ENCODE measurements at regions of chr10 and their contacts with region 1.

Region 1: DNA sequence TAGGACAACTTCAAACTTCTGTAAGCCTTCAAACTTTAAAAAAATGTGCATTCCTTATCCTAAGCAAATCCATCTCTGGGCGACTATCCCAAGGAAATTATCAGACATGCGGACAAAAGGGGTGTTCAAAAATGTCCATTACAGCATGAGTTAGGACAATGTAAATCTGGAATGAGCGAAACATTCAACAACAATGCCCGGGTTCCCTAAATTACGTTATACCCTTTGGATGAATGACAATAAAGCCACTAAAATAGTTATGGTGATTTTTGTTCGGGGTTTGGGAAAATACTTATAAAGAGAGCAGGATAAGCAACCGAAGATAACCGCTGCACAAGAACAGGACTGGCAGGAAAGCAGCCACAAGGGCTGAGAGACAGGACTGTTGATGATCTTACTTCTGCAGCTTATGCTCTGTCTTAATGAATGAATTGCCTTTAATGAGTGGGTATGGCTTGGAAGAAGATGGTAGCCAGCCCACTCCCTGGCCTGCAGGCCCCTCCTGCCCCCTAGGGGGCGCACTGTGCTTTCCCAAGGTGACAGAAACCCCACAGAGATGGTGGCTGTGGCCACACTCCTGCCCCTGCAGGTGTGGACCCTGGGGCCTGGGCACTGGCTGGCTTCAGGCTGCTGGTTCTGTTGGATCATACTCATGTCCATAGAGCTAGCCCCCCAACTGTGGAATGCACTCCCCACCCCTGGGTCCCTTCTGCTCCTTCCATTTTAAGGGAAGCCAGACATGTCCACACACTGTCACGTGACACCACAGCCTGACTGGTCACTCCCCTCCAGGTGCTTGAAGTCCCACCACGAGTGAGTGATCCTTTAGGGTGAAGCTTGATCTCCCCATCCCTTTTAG is 45.0 kb downstream of the ZCCHC24 start:
- DNase-seq: peak; percentile 51
- H3K4me3 ChIP-seq: no peak overlapping the region
- H3K27ac ChIP-seq: no peak overlapping the region
- H3K4me1 ChIP-seq: no peaks in the 10 kb centered on the region
- CTCF ChIP-seq: peak; percentile 89

Region 2: GRCh38 chr10:79463578-79464496 is 63.5 kb after region 1 on chr10:
- CTCF ChIA-PET with region 1: no interaction called
- POLR2A ChIA-PET with region 1: no interaction called
- intact Hi-C with region 1: loop called (anchors 2 kb)
- DNase-seq: no peak
- H3K4me3 ChIP-seq: no peak overlapping the region
- H3K27ac ChIP-seq: no peak overlapping the region
- H3K4me1 ChIP-seq: no peaks in the 10 kb centered on the region
- CTCF ChIP-seq: no peak

Measured in OCI-LY7 (cell line).